Calu3 (cell line): ENCODE measurements at regions of chr20 and their contacts with region 1.

Region 1: GRCh38 chr20:36199345-36200257 is 36.7 kb upstream of the AAR2 start:
- DNase-seq: peak; percentile 92
- H3K4me3 Mint-ChIP-seq: no peak overlapping the region
- H3K27ac Mint-ChIP-seq: no peak overlapping the region
- H3K4me1 Mint-ChIP-seq: no peaks in the 10 kb centered on the region
- H3K27me3 Mint-ChIP-seq: no peaks in the 10 kb centered on the region
- CTCF ChIP-seq: peak; percentile 98

Region 2: DNA sequence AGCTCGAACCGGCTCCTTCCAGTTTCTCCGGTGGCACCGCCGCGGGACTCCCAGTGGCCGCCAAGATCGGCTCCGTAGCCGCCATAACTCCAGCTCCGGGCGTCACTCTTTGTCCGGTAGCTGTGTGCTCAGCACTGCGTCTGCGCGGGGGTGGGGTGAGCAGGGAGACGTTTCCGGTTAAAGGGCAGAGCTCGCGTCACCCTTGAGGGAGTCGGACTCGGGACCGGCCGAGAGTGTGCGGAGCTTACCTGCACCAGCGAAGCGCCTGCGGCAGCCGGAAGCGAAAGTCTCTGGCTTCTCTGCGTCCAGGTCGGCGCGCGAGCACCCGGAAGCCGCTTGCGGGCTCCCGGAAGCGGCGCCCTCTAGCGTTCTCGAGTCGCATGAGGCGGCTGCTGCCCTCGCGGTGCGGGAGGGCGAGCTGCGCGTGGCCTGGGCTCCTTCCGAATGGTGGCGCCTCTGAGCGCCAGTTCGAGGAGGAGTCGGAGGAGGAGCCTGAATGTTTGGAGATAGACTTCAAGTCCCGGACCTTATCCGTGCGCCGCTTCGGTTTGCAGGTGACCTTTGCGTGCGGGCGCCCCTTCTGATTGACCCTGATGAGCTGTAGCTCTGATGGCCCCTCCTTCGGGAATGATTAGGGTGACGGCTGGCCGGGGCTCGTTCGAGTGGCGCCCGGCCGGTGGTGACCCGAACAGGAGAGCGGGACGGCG is 245.2 kb before region 1 on chr20 and contains the start of gene SCAND1:
- CTCF ChIA-PET with region 1: interaction called, 16 read pairs
- intact Hi-C with region 1: no loop called
- DNase-seq: peak; percentile 99
- H3K4me3 Mint-ChIP-seq: peak within 1 kb of the TSS; percentile 99
- H3K27ac Mint-ChIP-seq: peak within 1 kb of the TSS; percentile 88
- H3K4me1 Mint-ChIP-seq: peaks cover 13% of the 10 kb centered on the region
- H3K27me3 Mint-ChIP-seq: no peaks in the 10 kb centered on the region
- CTCF ChIP-seq: peak; percentile 96
- total RNA-seq, gene SCAND1: 83.5 and 88.6 TPM in 2 replicates

Region 3: GRCh38 chr20:36154700-36155628 is 44.6 kb before region 1 on chr20 and contains the start of gene EPB41L1:
- CTCF ChIA-PET with region 1: interaction called, 4 read pairs
- intact Hi-C with region 1: loop called (anchors 1 kb)
- DNase-seq: no peak
- H3K4me3 Mint-ChIP-seq: peak within 1 kb of the TSS; percentile 65
- H3K27ac Mint-ChIP-seq: peak within 1 kb of the TSS; percentile 9
- H3K4me1 Mint-ChIP-seq: peaks cover 34% of the 10 kb centered on the region
- H3K27me3 Mint-ChIP-seq: no peaks in the 10 kb centered on the region
- CTCF ChIP-seq: no peak
- total RNA-seq, gene EPB41L1: 121 and 184 TPM in 2 replicates

Region 4: GRCh38 chr20:36773107-36773596 is 573.6 kb after region 1 on chr20:
- CTCF ChIA-PET with region 1: no interaction called
- intact Hi-C with region 1: no loop called
- DNase-seq: no peak
- H3K4me3 Mint-ChIP-seq: peak overlapping the region; percentile 77
- H3K27ac Mint-ChIP-seq: peak overlapping the region; percentile 93
- H3K4me1 Mint-ChIP-seq: peaks cover 24% of the 10 kb centered on the region
- H3K27me3 Mint-ChIP-seq: no peaks in the 10 kb centered on the region
- CTCF ChIP-seq: no peak